SK-N-SH (cell line): ENCODE measurements at regions of chr1 and their contacts with region 1.

Region 1: GRCh38 chr1:225318706-225319575 is 108.9 kb downstream of the LBR start:
- DNase-seq: peak; percentile 42
- H3K4me3 ChIP-seq: no peak overlapping the region
- H3K27ac ChIP-seq: no peak overlapping the region
- H3K4me1 ChIP-seq: no peaks in the 10 kb centered on the region
- H3K27me3 ChIP-seq: no peaks in the 10 kb centered on the region; the same call in 1 of the 2 replicates
- CTCF ChIP-seq: peak; percentile 78
- EP300 ChIP-seq: no peak
- RAD21 ChIP-seq: peak; percentile 70

Region 2: GRCh38 chr1:225299624-225300023 is 19.3 kb before region 1 on chr1:
- CTCF ChIA-PET with region 1: interaction called, 10 read pairs
- POLR2A ChIA-PET with region 1: no interaction called
- DNase-seq: no peak
- H3K4me3 ChIP-seq: no peak overlapping the region
- H3K27ac ChIP-seq: no peak overlapping the region
- H3K4me1 ChIP-seq: no peaks in the 10 kb centered on the region
- H3K27me3 ChIP-seq: no peaks in the 10 kb centered on the region
- CTCF ChIP-seq: no peak
- EP300 ChIP-seq: no peak
- RAD21 ChIP-seq: no peak

Region 3: DNA sequence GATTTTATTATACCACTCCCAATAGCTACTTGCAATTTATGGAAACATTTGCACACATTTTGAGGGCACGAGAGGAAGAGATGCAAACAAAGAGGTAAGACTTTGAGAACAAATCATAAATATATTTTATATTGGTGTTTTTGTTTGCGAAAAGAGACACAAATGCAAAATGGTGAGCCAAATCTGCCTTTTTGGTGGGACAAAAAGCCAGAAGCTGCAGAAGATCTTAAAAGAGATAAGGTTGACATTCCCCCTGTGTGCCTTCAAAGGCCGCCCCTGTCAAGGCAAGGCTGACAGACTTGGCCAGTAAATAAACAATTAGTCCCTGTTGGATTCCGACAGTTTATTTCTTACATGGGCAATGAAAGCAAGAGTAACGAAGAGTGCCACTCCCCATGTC is 13.9 kb before region 1 on chr1:
- CTCF ChIA-PET with region 1: interaction called, 36 read pairs
- POLR2A ChIA-PET with region 1: no interaction called
- DNase-seq: no peak
- H3K4me3 ChIP-seq: no peak overlapping the region
- H3K27ac ChIP-seq: no peak overlapping the region
- H3K4me1 ChIP-seq: no peaks in the 10 kb centered on the region
- H3K27me3 ChIP-seq: no peaks in the 10 kb centered on the region
- CTCF ChIP-seq: no peak
- EP300 ChIP-seq: no peak
- RAD21 ChIP-seq: no peak

Region 4: GRCh38 chr1:225329041-225329440 is 10.1 kb after region 1 on chr1:
- CTCF ChIA-PET with region 1: interaction called, 17 read pairs
- POLR2A ChIA-PET with region 1: no interaction called
- DNase-seq: no peak
- H3K4me3 ChIP-seq: no peak overlapping the region
- H3K27ac ChIP-seq: no peak overlapping the region
- H3K4me1 ChIP-seq: no peaks in the 10 kb centered on the region
- H3K27me3 ChIP-seq: no peaks in the 10 kb centered on the region
- CTCF ChIP-seq: no peak
- EP300 ChIP-seq: no peak
- RAD21 ChIP-seq: no peak

Region 5: DNA sequence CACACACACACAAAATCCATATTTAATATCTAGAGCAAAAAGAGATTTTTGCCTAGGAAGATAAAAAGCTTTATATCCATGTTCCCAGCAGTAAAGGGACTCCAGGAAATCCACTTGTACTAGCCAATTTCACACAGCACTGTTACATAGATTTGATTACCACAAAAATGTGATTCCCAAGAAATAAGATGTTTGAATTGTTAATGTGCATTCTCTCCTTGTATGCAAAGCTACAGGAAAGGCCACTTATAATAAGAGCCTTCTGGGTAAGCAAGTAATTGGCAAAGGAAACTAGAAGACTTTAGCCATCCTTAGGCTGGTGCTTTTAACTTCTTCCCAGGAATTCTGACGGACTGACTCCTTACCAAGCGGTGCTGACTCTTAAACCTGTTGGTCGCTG is 19.6 kb after region 1 on chr1:
- CTCF ChIA-PET with region 1: interaction called, 17 read pairs
- POLR2A ChIA-PET with region 1: no interaction called
- DNase-seq: no peak
- H3K4me3 ChIP-seq: no peak overlapping the region
- H3K27ac ChIP-seq: no peak overlapping the region
- H3K4me1 ChIP-seq: no peaks in the 10 kb centered on the region
- H3K27me3 ChIP-seq: no peaks in the 10 kb centered on the region
- CTCF ChIP-seq: no peak
- EP300 ChIP-seq: no peak
- RAD21 ChIP-seq: no peak

Region 6: DNA sequence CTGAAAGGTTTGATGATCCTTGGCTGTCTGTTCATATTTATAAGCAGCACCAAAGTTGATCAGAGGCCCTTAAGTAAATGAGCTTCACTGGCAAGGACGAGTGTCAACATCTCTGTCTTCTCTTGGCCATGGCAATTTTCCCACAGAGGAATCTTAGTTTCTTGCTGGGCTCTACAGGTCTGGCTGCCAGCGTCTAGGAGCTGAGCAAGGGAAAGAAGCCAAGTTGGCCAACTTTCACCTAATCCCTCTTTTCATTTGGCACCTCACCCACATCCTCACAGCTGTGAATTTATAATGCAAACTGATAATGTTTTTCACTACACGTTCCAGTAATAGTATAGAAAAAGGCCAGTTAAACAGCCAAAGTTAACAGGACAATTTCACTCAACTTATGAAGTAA is 207.9 kb after region 1 on chr1:
- CTCF ChIA-PET with region 1: no interaction called
- POLR2A ChIA-PET with region 1: no interaction called
- DNase-seq: no peak
- H3K4me3 ChIP-seq: no peak overlapping the region
- H3K27ac ChIP-seq: no peak overlapping the region
- H3K4me1 ChIP-seq: peaks cover 2 to 4% of the 10 kb centered on the region in 2 experiments; a peak in 2 of 4 replicates
- H3K27me3 ChIP-seq: no peaks in the 10 kb centered on the region
- CTCF ChIP-seq: no peak
- EP300 ChIP-seq: no peak
- RAD21 ChIP-seq: no peak

Region 7: DNA sequence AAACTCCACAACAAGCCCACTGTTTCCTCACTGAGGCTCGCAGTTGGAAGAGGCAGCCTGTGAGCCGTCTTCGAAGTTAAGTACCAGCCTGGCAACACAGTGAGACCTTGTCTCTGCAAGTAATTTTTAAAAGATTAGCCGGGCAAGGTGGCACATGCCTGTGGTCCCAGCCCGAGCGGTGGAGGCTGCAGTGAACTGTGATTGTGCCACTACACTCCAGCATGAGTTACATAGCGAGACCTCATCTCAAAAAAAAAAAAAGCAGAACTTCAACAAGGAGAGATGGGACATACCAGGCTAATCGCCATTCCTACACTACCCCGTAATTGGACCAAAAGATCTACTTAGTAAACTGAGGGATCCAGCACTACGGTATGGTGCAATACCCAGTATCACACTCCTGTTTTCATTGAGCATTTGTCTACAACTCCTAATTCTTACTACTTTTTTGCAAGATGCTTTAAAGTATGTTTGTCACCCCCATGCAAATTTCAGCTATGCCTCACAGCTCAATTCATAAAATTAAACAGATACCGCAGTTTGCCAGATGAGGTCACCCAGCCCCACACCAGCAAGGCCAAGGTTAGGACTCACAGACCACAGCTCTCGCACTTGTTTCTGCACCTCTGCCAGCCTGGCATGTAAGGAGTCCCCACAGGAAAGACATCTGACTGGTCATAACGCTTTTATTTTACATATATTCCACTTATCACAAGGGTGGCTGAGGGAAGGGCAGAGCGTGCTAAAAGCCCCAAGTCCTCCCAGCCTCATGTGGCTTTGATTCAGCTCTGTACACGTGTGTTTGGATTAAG is 659.2 kb after region 1 on chr1:
- CTCF ChIA-PET with region 1: interaction called, 11 read pairs
- POLR2A ChIA-PET with region 1: no interaction called
- DNase-seq: no peak
- H3K4me3 ChIP-seq: no peak overlapping the region
- H3K27ac ChIP-seq: no peak overlapping the region
- H3K4me1 ChIP-seq: no peaks in the 10 kb centered on the region; a peak in 1 of 4 replicates
- H3K27me3 ChIP-seq: no peaks in the 10 kb centered on the region
- CTCF ChIP-seq: no peak
- EP300 ChIP-seq: no peak
- RAD21 ChIP-seq: no peak